Heart right ventricle (tissue), 16 donors: ENCODE measurements at regions of chr2 and their contacts with region 1.

Region 1: DNA sequence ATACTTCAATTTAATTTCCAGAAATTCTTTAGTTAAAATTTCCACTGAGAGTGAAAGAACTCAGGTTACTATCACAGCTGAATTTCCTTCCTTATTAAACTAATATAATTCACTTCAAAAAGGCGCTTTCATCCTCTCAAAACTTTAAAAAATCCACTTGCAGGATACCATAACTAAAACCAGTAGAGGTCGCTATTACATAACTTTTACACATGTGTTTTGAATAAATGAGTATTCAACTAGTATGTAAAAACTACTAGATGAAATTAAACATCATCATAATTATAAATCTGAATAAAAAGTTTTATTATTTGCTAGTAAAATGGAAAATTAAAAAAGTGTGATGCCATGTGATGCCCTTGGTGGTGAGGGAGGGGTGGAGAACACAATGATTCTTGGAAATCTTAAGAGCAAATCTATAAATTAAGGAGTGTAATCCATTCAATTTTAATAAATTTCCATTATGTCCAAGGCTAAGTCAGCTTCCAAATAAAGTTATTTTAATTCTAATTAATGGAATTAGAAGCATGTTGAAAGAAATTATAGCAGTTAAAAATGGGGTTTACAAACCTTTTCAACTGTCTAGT is 61.4 kb downstream of the SOS1 start:
- DNase-seq: no peak
- ATAC-seq: no peak
- H3K4me3 ChIP-seq: no peak overlapping the region
- H3K27ac ChIP-seq: no peak overlapping the region
- H3K4me1 ChIP-seq: no peaks in the 10 kb centered on the region
- H3K27me3 ChIP-seq: no peaks in the 10 kb centered on the region
- CTCF ChIP-seq: peak; percentile 45 to 83 (median 76)

Region 2: GRCh38 chr2:39227628-39228412 is 168.4 kb after region 1 on chr2:
- intact Hi-C with region 1: loop called (anchors 1 to 5 kb)
- DNase-seq: peak; percentile 76 to 81
- ATAC-seq: peak; percentile 80 to 92 (median 88)
- H3K4me3 ChIP-seq: peak overlapping the region in 7 of 10 donors; percentile 7 to 40 (median 31)
- H3K27ac ChIP-seq: no peak overlapping the region
- H3K4me1 ChIP-seq: peaks cover 0 to 23% (median 15%) of the 10 kb centered on the region in 9 donors
- H3K27me3 ChIP-seq: no peaks in the 10 kb centered on the region
- CTCF ChIP-seq: peak; percentile 83 to 96 (median 90)